Activated CD4-positive, alpha-beta memory T cell treated with anti-CD3 and anti-CD28 coated beads for 36 hours (primary cell): ENCODE measurements at regions of chr3 and their contacts with region 1.

Region 1: DNA sequence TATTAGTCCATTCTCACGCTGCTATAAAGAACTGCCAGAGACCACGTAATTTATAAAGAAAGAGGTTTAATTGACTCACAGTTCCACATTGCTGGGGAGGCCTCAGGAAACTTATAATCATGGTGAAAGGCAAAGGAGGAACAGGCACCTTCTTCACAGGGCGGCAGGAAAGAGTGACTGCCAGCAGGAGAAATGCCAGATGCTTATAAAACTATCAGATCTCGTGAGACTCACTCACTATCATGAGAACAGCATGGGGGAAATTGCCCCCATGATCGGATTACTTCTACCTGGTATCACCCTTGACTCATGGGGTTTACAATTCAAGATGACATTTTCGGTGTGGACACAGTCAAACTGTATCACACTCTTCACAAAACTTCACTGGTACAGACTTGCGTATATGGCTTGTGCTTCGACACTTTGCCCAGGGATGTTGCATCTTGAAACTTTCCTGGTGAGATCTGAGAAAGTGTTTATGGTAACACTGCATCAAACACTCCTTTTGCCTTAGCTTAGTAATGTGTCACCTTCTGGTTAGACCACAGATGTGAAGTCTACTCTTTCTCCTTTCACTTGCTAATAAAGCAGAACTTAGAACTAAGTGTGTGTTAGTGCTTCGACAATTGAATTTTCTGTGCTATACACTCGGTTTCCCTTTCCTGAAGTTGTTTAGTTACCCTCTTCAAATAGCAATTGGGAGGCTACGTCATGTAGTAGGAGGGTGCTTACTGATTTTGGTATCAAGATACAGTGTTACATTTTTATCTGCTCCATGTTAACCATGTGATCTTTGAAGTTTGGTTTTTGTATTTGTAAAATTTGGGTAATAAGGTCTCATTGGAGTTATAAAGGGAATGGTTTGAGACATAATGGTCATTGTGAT is 185.7 kb downstream of the LPP start:
- DNase-seq: peak; percentile 75
- H3K4me3 Mint-ChIP-seq: peak overlapping the region; percentile 68
- H3K27ac Mint-ChIP-seq: peak overlapping the region; percentile 93
- H3K4me1 Mint-ChIP-seq: peaks cover 44% of the 10 kb centered on the region
- H3K27me3 Mint-ChIP-seq: peaks cover 2% of the 10 kb centered on the region

Region 2: GRCh38 chr3:188061133-188061532 is 278.5 kb before region 1 on chr3:
- CTCF ChIA-PET with region 1: no interaction called
- POLR2A ChIA-PET with region 1: no interaction called
- intact Hi-C with region 1: loop called (anchors 1 kb)
- DNase-seq: peak; percentile 81
- H3K4me3 Mint-ChIP-seq: peak overlapping the region; percentile 44
- H3K27ac Mint-ChIP-seq: peak overlapping the region; percentile 80
- H3K4me1 Mint-ChIP-seq: peaks cover 35% of the 10 kb centered on the region
- H3K27me3 Mint-ChIP-seq: no peaks in the 10 kb centered on the region

Region 3: GRCh38 chr3:188257384-188258026 is 82.1 kb before region 1 on chr3:
- CTCF ChIA-PET with region 1: no interaction called
- POLR2A ChIA-PET with region 1: no interaction called
- intact Hi-C with region 1: loop called (anchors 1 kb)
- DNase-seq: no peak
- H3K4me3 Mint-ChIP-seq: no peak overlapping the region
- H3K27ac Mint-ChIP-seq: peak overlapping the region; percentile 47
- H3K4me1 Mint-ChIP-seq: peaks cover 49% of the 10 kb centered on the region
- H3K27me3 Mint-ChIP-seq: no peaks in the 10 kb centered on the region

Region 4: GRCh38 chr3:188294823-188295487 is 44.7 kb before region 1 on chr3:
- CTCF ChIA-PET with region 1: no interaction called
- POLR2A ChIA-PET with region 1: interaction called, 3 read pairs
- intact Hi-C with region 1: loop called (anchors 1 kb)
- DNase-seq: no peak
- H3K4me3 Mint-ChIP-seq: no peak overlapping the region
- H3K27ac Mint-ChIP-seq: peak overlapping the region; percentile 72
- H3K4me1 Mint-ChIP-seq: peaks cover 79% of the 10 kb centered on the region
- H3K27me3 Mint-ChIP-seq: no peaks in the 10 kb centered on the region

Region 5: DNA sequence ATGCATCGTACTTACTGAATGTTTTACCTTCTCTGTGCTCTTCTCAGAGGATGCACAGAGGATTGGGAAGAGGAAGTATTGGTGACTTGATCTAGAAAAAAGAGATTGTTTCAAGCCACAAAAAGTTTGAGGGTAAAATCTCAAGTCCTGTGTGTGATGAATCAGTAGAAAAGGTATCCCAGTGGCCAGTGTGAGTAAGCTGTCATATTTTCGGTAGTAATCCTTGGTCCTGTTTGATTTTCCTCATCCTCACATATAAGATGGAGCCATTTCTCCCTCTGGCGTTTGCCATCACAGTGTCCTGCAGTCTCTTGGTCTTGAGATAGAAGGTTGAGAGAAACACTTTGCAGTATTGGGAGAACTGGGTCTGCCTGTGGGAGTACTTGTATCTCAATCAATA is 18.9 kb before region 1 on chr3:
- CTCF ChIA-PET with region 1: interaction called, 4 read pairs
- POLR2A ChIA-PET with region 1: interaction called, 18 read pairs
- intact Hi-C with region 1: loop called (anchors 1 kb)
- DNase-seq: no peak
- H3K4me3 Mint-ChIP-seq: no peak overlapping the region
- H3K27ac Mint-ChIP-seq: no peak overlapping the region
- H3K4me1 Mint-ChIP-seq: peaks cover 58% of the 10 kb centered on the region
- H3K27me3 Mint-ChIP-seq: peaks cover 2% of the 10 kb centered on the region

Region 6: GRCh38 chr3:188400494-188401243 is 61.0 kb after region 1 on chr3:
- CTCF ChIA-PET with region 1: no interaction called
- POLR2A ChIA-PET with region 1: no interaction called
- intact Hi-C with region 1: loop called (anchors 2 kb)
- DNase-seq: peak; percentile 48
- H3K4me3 Mint-ChIP-seq: no peak overlapping the region
- H3K27ac Mint-ChIP-seq: peak overlapping the region; percentile 4
- H3K4me1 Mint-ChIP-seq: peaks cover 68% of the 10 kb centered on the region
- H3K27me3 Mint-ChIP-seq: no peaks in the 10 kb centered on the region

Region 7: DNA sequence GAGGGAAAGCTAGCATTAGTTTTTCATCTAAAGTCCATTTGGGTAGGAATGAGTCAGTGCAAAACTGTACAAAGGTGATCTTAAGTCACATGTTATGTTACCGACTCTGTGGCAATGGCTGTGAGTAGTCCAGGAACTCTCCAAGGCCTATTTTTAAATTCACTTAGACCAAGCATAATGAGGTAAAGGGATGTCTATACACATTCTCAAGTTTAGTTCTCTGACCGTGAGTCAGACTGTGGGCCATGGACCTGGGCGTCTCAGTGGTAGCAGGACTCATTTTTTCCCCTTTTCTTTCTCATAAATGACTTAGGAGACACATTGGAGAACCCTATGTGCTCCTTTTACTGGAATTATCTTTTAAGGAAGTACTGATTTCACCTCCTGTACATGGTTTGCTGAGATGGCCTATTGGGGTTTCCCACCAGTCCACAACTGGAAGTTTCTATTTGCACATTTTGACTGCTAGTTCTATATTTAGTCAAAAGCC is 343.4 kb after region 1 on chr3:
- CTCF ChIA-PET with region 1: no interaction called
- POLR2A ChIA-PET with region 1: no interaction called
- intact Hi-C with region 1: loop called (anchors 1 kb)
- DNase-seq: peak; percentile 74
- H3K4me3 Mint-ChIP-seq: no peak overlapping the region
- H3K27ac Mint-ChIP-seq: peak overlapping the region; percentile 40
- H3K4me1 Mint-ChIP-seq: peaks cover 41% of the 10 kb centered on the region
- H3K27me3 Mint-ChIP-seq: no peaks in the 10 kb centered on the region